ENCODE measurements at regions of chr10 and their contacts with region 1.

Region 1: DNA sequence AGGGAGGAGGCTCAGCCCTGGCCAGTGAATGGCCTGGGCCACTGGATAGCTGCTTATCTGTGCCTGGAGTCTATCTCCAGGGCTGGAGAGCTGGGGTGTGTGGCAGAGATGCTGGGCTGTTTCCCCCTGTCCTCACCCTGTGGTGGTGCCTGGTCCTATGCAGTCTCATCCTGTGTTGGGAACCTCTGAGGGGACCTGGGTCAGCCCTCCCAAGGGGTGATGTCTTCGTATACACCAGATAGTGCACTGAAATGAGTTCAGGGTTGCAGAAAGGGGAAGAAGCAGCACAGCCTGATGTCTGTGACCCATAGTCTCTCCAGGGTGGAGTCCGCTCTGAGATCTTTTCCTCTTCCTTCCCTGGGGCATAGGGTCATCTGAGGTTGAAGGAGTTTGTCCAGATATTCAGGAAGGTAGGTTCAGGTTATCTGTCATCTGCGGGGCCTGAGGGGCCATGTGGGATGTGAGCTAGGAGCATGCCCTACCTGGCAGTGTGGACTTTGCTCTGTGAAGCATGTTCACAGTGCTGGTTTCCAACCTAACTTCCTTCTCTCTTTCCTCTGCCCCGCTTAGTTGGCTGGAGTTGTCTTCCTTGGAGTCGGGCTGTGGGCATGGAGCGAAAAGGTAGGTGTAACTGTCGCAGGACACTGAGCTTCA is 33.4 kb upstream of the SH2D4B start:
- DNase-seq: no peak
- ATAC-seq: no peak
- H3K4me3 ChIP-seq: no peak overlapping the region
- H3K27ac ChIP-seq: no peak overlapping the region
- H3K4me1 ChIP-seq: peaks cover 31% of the 10 kb centered on the region
- H3K27me3 ChIP-seq: no peaks in the 10 kb centered on the region
- CTCF ChIP-seq: no peak
- EP300 ChIP-seq: no peak
- POLR2A ChIP-seq: no peak
- RAD21 ChIP-seq: no peak

Region 2: DNA sequence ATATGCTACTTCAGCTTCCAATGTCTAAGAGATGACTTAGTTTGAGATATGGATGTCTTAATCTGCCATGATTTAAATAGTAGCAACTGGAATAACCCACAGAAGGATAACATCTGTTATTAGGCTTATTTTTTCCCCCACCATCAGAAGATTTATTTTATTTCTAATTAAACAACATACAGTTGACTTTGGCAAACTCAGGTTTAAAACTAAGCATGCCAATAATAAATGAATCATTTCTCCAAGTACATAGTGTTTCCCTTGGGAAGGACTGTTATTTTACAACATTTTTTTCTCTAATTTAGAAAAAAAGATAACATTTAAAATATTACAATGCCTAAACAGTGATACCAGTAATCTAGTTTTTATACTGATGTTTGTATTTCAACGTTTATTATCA is 613.8 kb before region 1 on chr10:
- CTCF ChIA-PET with region 1: no interaction called
- POLR2A ChIA-PET with region 1: no interaction called
- RAD21 ChIA-PET with region 1: no interaction called
- SMC1A ChIA-PET with region 1: no interaction called
- in situ Hi-C with region 1: no loop called
- intact Hi-C with region 1: no loop called
- DNase-seq: no peak
- ATAC-seq: no peak
- H3K4me3 ChIP-seq: no peak overlapping the region
- H3K27ac ChIP-seq: no peak overlapping the region
- H3K4me1 ChIP-seq: no peaks in the 10 kb centered on the region
- H3K27me3 ChIP-seq: no peaks in the 10 kb centered on the region; a peak in 1 of 4 replicates
- CTCF ChIP-seq: no peak
- EP300 ChIP-seq: no peak
- POLR2A ChIP-seq: no peak
- RAD21 ChIP-seq: no peak

Region 3: DNA sequence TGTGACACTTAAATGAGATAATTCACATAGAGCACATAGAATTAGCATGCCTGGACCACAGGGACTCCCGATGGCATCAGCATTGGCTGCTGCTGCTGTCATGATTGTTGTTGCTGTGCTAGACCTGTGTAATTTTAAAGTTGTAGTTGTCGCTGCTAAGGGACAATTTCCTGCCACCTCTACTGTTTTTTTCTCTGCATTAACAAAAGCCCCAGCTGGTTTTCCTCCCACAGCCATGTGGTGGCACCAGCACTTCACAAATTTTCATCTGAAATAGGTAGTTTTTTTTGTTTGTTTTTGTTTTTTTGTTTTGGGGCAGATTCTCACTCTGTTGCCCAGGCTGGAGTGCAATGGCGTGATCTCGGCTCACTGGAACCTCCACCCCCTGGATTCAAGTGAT is 121.3 kb before region 1 on chr10:
- CTCF ChIA-PET with region 1: interaction called, 15 read pairs
- POLR2A ChIA-PET with region 1: no interaction called
- RAD21 ChIA-PET with region 1: interaction called, 18 read pairs
- SMC1A ChIA-PET with region 1: interaction called, 17 read pairs
- in situ Hi-C with region 1: loop called (anchors 5 kb)
- intact Hi-C with region 1: loop called (anchors 5 kb)
- DNase-seq: peak; percentile 19
- ATAC-seq: peak; percentile 65
- H3K4me3 ChIP-seq: no peak overlapping the region
- H3K27ac ChIP-seq: no peak overlapping the region
- H3K4me1 ChIP-seq: no peaks in the 10 kb centered on the region
- H3K27me3 ChIP-seq: peaks cover 0 to 3% of the 10 kb centered on the region in 2 experiments; a peak in 1 of 4 replicates
- CTCF ChIP-seq: peak; percentile 52 to 68 (median 66)
- EP300 ChIP-seq: no peak
- POLR2A ChIP-seq: no peak
- RAD21 ChIP-seq: peak; percentile 72

Region 4: GRCh38 chr10:80493522-80494051 is 10.7 kb before region 1 on chr10:
- CTCF ChIA-PET with region 1: interaction called, 19 read pairs
- POLR2A ChIA-PET with region 1: interaction called, 5 read pairs
- RAD21 ChIA-PET with region 1: interaction called, 9 read pairs
- SMC1A ChIA-PET with region 1: interaction called, 25 read pairs
- in situ Hi-C with region 1: no loop called
- intact Hi-C with region 1: no loop called
- DNase-seq: no peak
- ATAC-seq: peak; percentile 75
- H3K4me3 ChIP-seq: peak overlapping the region; percentile 15; the same call in 1 of the 2 replicates
- H3K27ac ChIP-seq: peak overlapping the region; percentile 47
- H3K4me1 ChIP-seq: peaks cover 26% of the 10 kb centered on the region
- H3K27me3 ChIP-seq: no peaks in the 10 kb centered on the region
- CTCF ChIP-seq: no peak
- EP300 ChIP-seq: no peak
- POLR2A ChIP-seq: no peak
- RAD21 ChIP-seq: no peak

Region 5: DNA sequence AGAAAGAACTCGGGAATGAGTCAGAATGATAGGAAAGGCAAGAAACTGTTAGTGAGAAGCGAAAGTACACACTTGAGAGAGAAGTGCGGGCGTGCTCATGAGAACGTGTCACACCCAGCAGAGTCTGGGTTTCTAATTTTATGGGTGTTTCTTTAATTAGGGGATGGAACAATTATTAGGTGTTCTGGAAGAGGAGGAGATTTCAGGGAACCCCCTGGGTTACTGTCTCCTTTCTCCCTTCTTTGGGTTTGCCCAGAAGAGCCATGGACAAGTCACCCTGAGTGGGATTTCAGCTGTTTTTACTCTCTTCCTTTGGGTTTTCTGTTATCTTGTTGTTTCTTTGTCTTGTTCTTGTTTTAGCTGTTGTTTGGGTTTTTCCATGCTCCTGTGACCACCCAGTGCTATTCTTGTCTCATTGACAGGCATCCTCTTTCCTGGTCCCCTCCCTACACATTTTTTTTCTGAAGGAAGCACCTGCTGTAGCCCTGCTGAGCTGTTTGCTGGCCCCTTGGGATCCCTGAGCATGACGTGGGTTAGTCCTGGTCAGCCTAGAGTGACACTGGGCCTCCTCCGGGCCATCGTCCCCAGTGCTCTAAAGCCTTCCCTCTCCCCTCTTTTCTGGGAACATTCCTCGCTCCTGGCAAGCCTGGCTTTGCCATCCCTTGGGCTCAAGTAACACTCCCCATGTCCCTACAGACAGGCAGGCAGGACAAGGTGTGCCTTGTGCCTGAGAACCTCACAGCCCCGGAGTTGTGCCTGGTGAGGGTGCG is 36.9 kb after region 1 on chr10:
- CTCF ChIA-PET with region 1: interaction called, 14 read pairs
- POLR2A ChIA-PET with region 1: interaction called, 3 read pairs
- RAD21 ChIA-PET with region 1: interaction called, 4 read pairs
- SMC1A ChIA-PET with region 1: interaction called, 3 read pairs
- in situ Hi-C with region 1: no loop called
- intact Hi-C with region 1: no loop called
- DNase-seq: peak; percentile 60
- ATAC-seq: peak; percentile 68
- H3K4me3 ChIP-seq: no peak overlapping the region; the same call in 1 of the 2 replicates
- H3K27ac ChIP-seq: peak overlapping the region; percentile 82
- H3K4me1 ChIP-seq: peaks cover 28% of the 10 kb centered on the region
- H3K27me3 ChIP-seq: no peaks in the 10 kb centered on the region
- CTCF ChIP-seq: no peak
- EP300 ChIP-seq: peak in 1 of 2 experiments; percentile 41; a peak in 1 of 4 replicates
- POLR2A ChIP-seq: no peak
- RAD21 ChIP-seq: no peak

Region 6: DNA sequence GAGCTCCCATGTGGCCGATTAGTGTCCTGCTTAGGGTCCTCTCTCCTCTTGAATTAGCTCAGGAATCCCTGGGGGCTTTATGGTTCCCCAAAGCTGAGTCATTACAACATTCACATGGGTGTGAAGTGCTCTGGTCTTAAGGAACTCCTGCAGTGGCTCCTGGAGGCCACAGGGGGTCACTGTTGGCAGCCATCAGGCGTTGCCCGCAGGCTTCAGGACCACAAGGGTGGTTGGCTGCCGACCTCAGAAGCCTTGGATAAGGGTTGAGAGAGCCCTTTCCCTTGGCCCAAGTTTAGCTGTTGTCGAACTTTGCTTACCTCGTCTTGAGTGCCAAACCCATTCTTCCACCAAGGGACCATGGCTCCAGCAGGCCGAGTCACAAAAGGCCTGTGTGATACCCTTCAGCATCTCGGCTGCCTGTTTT is 95.2 kb after region 1 on chr10:
- CTCF ChIA-PET with region 1: interaction called, 31 read pairs
- POLR2A ChIA-PET with region 1: no interaction called
- RAD21 ChIA-PET with region 1: interaction called, 21 read pairs
- SMC1A ChIA-PET with region 1: interaction called, 6 read pairs
- in situ Hi-C with region 1: no loop called
- intact Hi-C with region 1: no loop called
- DNase-seq: peak; percentile 57
- ATAC-seq: peak; percentile 79
- H3K4me3 ChIP-seq: no peak overlapping the region
- H3K27ac ChIP-seq: no peak overlapping the region; the same call in 1 of the 2 replicates
- H3K4me1 ChIP-seq: peaks cover 17% of the 10 kb centered on the region
- H3K27me3 ChIP-seq: no peaks in the 10 kb centered on the region
- CTCF ChIP-seq: peak; percentile 75 to 96 (median 90)
- EP300 ChIP-seq: peak in 1 of 2 experiments; percentile 46; a peak in 1 of 4 replicates
- POLR2A ChIP-seq: no peak
- RAD21 ChIP-seq: peak; percentile 71

Measured in GM12878 (cell line).